T-cell (primary cell): ENCODE measurements at regions of chr3 and their contacts with region 1.

Region 1: DNA sequence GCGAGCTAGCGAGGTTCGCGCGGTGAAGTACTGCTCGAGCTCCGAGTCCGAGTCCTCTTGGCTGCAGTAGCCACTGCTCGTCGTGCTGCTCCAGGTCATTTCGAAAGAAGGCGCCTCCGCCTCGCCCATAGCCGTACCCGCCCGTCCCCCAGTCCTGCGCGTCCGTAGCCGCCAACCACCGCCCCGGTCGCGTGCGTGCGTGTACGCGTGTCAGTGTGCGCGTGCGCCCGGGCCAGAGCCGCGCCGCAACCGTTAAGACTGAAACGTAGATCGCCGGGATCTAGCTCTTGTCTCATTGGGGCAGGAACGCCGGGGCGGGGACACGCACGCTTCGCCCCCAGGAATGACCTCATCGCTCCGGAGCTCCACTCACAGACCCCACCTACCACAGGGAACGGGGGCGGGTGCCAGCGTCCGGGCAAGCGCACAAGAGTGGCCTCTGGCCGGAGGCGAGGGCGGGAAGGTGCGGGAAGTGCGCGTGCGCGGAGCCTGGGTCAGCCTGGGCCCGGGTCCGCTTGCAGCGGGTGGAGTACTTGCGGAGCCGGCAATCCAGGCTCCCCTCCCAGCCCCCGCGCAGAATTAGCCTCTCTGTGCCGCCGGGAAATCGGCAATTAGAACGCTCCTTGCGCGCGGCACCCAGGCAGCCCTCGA is 3.3 kb downstream of the RASSF1 start:
- DNase-seq: peak; percentile 80 to 97 (median 90)
- ATAC-seq: peak; percentile 77 to 84 (median 80)
- H3K4me3 ChIP-seq: peak overlapping the region; percentile 68 to 84
- H3K4me3 Mint-ChIP-seq: peak overlapping the region; percentile 86 to 90 (median 88)
- H3K27ac ChIP-seq: peak overlapping the region; percentile 97
- H3K27ac Mint-ChIP-seq: peak overlapping the region; percentile 93 to 95
- H3K4me1 ChIP-seq: peaks cover 32 to 95% of the 10 kb centered on the region in 2 experiments
- H3K4me1 Mint-ChIP-seq: peaks cover 63 to 71% (median 71%) of the 10 kb centered on the region in 3 donors
- H3K27me3 ChIP-seq: no peaks in the 10 kb centered on the region
- H3K27me3 Mint-ChIP-seq: no peaks in the 10 kb centered on the region

Region 2: GRCh38 chr3:50264370-50264963 is 72.8 kb before region 1 on chr3:
- CTCF ChIA-PET with region 1: no interaction called
- POLR2A ChIA-PET with region 1: no interaction called
- DNase-seq: no peak
- ATAC-seq: no peak
- H3K4me3 ChIP-seq: no peak overlapping the region
- H3K4me3 Mint-ChIP-seq: no peak overlapping the region
- H3K27ac ChIP-seq: no peak overlapping the region
- H3K27ac Mint-ChIP-seq: no peak overlapping the region
- H3K4me1 ChIP-seq: peaks cover 2 to 15% of the 10 kb centered on the region in 2 experiments
- H3K4me1 Mint-ChIP-seq: peaks cover 4 to 6% (median 6%) of the 10 kb centered on the region in 3 donors
- H3K27me3 ChIP-seq: peaks cover 0 to 39% of the 10 kb centered on the region in 2 experiments
- H3K27me3 Mint-ChIP-seq: peaks cover 3% of the 10 kb centered on the region in 2 donors

Region 3: GRCh38 chr3:50298836-50299637 is 38.3 kb before region 1 on chr3 and contains the starts of genes HYAL3 and NAA80:
- CTCF ChIA-PET with region 1: interaction called in 1 of 2 experiments, 16 read pairs
- POLR2A ChIA-PET with region 1: interaction called in 1 of 2 experiments, 10 read pairs
- DNase-seq: peak; percentile 97 to 100 (median 99)
- ATAC-seq: peak; percentile 84 to 91 (median 90)
- H3K4me3 ChIP-seq: peak within 1 kb of the TSS; percentile 75 to 92
- H3K4me3 Mint-ChIP-seq: peak within 1 kb of the TSS; percentile 95 to 97 (median 96)
- H3K27ac ChIP-seq: peak within 1 kb of the TSS; percentile 95
- H3K27ac Mint-ChIP-seq: peak within 1 kb of the TSS; percentile 98 to 100
- H3K4me1 ChIP-seq: peaks cover 9 to 38% of the 10 kb centered on the region in 2 experiments
- H3K4me1 Mint-ChIP-seq: peaks cover 25 to 33% (median 33%) of the 10 kb centered on the region in 3 donors
- H3K27me3 ChIP-seq: no peaks in the 10 kb centered on the region
- H3K27me3 Mint-ChIP-seq: no peaks in the 10 kb centered on the region
- total RNA-seq, gene HYAL3: 2.6 to 6.2 (median 3.9) TPM
- total RNA-seq, gene NAA80: 33.8 to 45.7 (median 43.9) TPM

Region 4: GRCh38 chr3:50350527-50351322 is 13.4 kb after region 1 on chr3 and contains the starts of genes CYB561D2 and NPRL2:
- CTCF ChIA-PET with region 1: interaction called in 1 of 2 experiments, 13 read pairs
- POLR2A ChIA-PET with region 1: interaction called in 1 of 2 experiments, 6 read pairs
- DNase-seq: peak; percentile 98 to 100 (median 99)
- ATAC-seq: peak; percentile 88 to 91 (median 90)
- H3K4me3 ChIP-seq: peak within 1 kb of the TSS; percentile 88 to 96
- H3K4me3 Mint-ChIP-seq: peak within 1 kb of the TSS; percentile 94 to 99 (median 97)
- H3K27ac ChIP-seq: peak within 1 kb of the TSS; percentile 89
- H3K27ac Mint-ChIP-seq: peak within 1 kb of the TSS; percentile 99 to 100
- H3K4me1 ChIP-seq: peaks cover 20 to 69% of the 10 kb centered on the region in 2 experiments
- H3K4me1 Mint-ChIP-seq: peaks cover 66 to 70% (median 67%) of the 10 kb centered on the region in 3 donors
- H3K27me3 ChIP-seq: no peaks in the 10 kb centered on the region
- H3K27me3 Mint-ChIP-seq: no peaks in the 10 kb centered on the region
- total RNA-seq, gene CYB561D2: 25.7 to 45.3 (median 32.7) TPM
- total RNA-seq, gene NPRL2: 26.6 to 52.2 (median 48.1) TPM

Region 5: DNA sequence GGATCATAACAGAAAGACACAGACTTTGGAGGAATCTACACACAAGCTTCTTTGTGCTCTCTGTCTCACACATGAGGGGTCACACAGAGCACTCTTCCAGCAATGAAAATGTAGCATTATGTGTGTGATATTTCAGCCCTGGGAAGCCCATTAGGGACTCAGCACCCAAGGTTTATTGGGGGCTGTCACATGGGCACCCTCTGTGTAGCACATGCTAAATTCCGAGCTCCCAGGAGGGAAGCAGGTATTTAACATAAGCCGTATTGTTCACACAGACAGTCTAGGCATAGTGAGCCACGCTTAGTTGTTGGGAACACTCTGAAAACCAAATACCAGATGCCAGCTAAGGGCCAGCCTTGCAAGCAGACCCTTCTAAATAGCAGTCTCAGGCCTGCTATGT is 786.2 kb after region 1 on chr3:
- CTCF ChIA-PET with region 1: no interaction called
- POLR2A ChIA-PET with region 1: no interaction called
- DNase-seq: no peak
- ATAC-seq: no peak
- H3K4me3 ChIP-seq: no peak overlapping the region
- H3K4me3 Mint-ChIP-seq: no peak overlapping the region
- H3K27ac ChIP-seq: no peak overlapping the region
- H3K27ac Mint-ChIP-seq: no peak overlapping the region
- H3K4me1 ChIP-seq: no peaks in the 10 kb centered on the region
- H3K4me1 Mint-ChIP-seq: no peaks in the 10 kb centered on the region
- H3K27me3 ChIP-seq: peaks cover 0 to 6% of the 10 kb centered on the region in 2 experiments
- H3K27me3 Mint-ChIP-seq: peaks cover 3 to 4% of the 10 kb centered on the region in 2 donors